ENCODE measurements at regions of chr7 and their contacts with region 1.

Region 1: DNA sequence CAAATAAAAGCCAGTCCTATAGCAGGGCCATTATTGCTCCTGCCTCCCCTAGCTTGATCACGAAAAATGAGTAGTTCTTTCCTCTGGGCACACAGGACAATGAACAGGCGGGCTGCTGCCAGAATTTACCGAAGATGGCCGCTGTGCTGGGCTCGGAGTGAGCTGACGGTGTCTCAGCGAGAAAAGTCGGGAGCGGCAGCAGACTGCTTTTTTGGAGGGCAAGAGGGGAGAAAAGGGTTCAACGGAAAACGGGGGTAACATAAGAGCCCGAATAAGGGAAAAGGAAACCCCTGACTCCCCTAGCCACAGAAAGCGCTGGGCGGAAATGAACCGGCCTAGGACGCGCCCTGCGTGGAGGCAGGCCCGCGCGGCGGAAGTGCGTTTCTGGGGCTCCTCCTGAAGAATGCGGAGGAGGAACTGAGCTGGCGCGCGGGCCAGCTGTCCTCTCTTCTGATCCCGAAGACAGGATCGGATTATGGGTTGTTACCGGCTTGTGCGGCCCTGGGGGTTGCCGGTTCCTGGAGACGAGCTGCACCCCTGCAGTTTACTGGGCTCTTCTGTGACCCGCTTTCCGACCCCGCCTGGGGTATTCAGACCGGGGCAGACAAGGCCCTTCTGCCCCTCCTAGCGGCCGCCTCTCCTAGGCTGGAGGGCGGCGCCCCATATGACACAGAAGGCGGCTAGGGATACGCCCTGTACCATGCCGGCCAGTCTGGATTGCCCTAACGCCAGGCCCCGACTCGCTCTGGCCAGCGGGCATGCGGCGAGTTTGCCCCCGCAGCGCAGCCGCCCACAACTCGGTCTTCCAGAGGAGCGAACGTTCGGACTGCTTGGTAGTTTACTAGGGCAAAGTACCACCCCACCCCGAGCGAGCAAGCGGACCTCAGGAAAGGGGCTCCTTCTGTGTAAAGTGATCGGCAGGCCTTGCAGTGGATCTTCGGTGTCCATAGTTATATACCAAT is 30.1 kb upstream of the KMT2E start:
- DNase-seq: peak; percentile 89
- H3K4me3 Mint-ChIP-seq: peak overlapping the region; percentile 98
- H3K27ac Mint-ChIP-seq: peak overlapping the region; percentile 100
- H3K4me1 Mint-ChIP-seq: peaks cover 70% of the 10 kb centered on the region
- H3K27me3 Mint-ChIP-seq: no peaks in the 10 kb centered on the region

Region 2: GRCh38 chr7:104569700-104570099 is 414.2 kb before region 1 on chr7:
- CTCF ChIA-PET with region 1: no interaction called
- POLR2A ChIA-PET with region 1: no interaction called
- DNase-seq: no peak
- H3K4me3 Mint-ChIP-seq: no peak overlapping the region
- H3K27ac Mint-ChIP-seq: no peak overlapping the region
- H3K4me1 Mint-ChIP-seq: no peaks in the 10 kb centered on the region
- H3K27me3 Mint-ChIP-seq: no peaks in the 10 kb centered on the region

Region 3: GRCh38 chr7:104941281-104941741 is 42.5 kb before region 1 on chr7:
- CTCF ChIA-PET with region 1: interaction called, 5 read pairs
- POLR2A ChIA-PET with region 1: interaction called, 14 read pairs
- DNase-seq: peak; percentile 14
- H3K4me3 Mint-ChIP-seq: peak overlapping the region; percentile 76
- H3K27ac Mint-ChIP-seq: peak overlapping the region; percentile 91
- H3K4me1 Mint-ChIP-seq: peaks cover 54% of the 10 kb centered on the region
- H3K27me3 Mint-ChIP-seq: no peaks in the 10 kb centered on the region

Region 4: GRCh38 chr7:104956753-104957450 is 27.0 kb before region 1 on chr7:
- CTCF ChIA-PET with region 1: interaction called, 11 read pairs
- POLR2A ChIA-PET with region 1: no interaction called
- DNase-seq: peak; percentile 50
- H3K4me3 Mint-ChIP-seq: peak overlapping the region; percentile 26
- H3K27ac Mint-ChIP-seq: peak overlapping the region; percentile 87
- H3K4me1 Mint-ChIP-seq: peaks cover 44% of the 10 kb centered on the region
- H3K27me3 Mint-ChIP-seq: no peaks in the 10 kb centered on the region

Region 5: DNA sequence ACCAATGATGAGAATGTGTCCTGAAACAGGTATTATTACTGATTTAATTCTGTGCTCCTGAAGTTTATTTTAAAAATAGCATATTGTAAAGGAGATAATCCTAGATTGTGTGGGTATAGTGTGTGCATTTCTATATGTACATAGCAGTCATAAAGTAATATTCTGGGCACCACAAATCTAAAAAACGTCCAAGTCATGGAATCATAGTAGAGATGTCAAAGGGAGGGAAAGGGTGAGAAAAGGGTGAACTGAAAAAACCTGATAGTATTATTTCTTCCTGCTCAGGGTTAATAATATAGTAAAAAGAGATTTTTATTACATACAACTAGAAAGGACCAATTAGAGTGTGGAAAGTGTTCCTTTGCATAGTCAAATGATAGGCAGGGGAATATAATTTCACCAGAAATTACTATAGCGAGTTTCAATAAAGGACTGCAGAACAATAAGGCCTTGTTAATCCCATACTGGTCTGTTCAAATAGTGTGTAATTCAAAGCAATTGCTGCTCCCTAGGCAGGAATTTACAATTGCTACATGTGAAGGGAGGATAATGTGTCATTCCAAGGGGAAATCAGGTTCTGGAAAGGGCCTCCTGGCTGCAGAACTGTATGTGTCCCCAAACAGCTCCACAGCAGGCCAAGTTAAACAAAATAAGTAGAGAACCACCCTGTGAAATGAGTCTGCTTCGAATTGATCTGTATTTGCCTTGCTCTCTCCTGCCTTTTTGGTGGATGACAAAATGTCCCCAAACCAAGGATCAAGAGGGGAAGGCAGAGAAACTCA is 12.4 kb before region 1 on chr7:
- CTCF ChIA-PET with region 1: interaction called, 15 read pairs
- POLR2A ChIA-PET with region 1: interaction called, 4 read pairs
- DNase-seq: no peak
- H3K4me3 Mint-ChIP-seq: no peak overlapping the region
- H3K27ac Mint-ChIP-seq: no peak overlapping the region
- H3K4me1 Mint-ChIP-seq: no peaks in the 10 kb centered on the region
- H3K27me3 Mint-ChIP-seq: no peaks in the 10 kb centered on the region

Region 6: DNA sequence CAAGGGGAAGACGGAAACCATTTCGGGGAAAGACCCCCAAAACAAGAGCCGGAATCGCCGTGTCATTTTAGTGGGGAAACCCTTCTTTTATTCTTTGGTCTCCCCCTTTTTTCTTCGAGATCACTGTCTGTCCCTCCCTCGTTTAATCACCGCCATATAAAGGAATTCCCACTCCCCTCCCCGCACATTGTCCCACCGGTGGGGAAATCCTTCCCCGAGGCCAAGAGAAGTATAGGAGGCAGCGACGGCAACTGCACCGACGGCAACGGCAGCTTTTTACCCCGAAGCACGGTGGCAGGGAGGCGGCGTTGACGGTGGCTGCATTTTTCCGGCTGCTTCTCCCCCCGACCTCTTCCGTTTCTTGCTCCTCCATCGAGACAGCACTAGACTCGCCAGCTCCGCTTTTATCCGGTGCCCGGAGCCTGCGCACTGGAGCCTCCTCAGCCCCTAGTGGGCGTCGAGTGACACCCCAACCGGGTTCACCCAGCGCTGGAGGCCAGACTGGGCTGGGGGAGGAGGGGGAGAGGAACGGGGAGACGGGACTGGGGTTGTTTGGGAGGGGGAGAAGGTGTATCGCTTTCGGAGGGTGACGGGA is 29.5 kb after region 1 on chr7:
- CTCF ChIA-PET with region 1: interaction called, 120 read pairs
- POLR2A ChIA-PET with region 1: interaction called, 13 read pairs
- DNase-seq: peak; percentile 96
- H3K4me3 Mint-ChIP-seq: peak overlapping the region; percentile 99
- H3K27ac Mint-ChIP-seq: peak overlapping the region; percentile 100
- H3K4me1 Mint-ChIP-seq: peaks cover 39% of the 10 kb centered on the region
- H3K27me3 Mint-ChIP-seq: no peaks in the 10 kb centered on the region

Measured in activated CD4-positive, alpha-beta T cell treated with anti-CD3 and anti-CD28 coated beads, Interleukin-2, amount 10 ng/mL, durations not matched to agents 7 days and 5 days (primary cell).